Aorta (tissue), 5 donors: ENCODE measurements at regions of chr21 and their contacts with region 1.

Region 1: GRCh38 chr21:21247451-21247850 is 249.2 kb downstream of the NCAM2 start:
- DNase-seq: no peak
- ATAC-seq: no peak
- H3K4me3 ChIP-seq: no peak overlapping the region
- H3K27ac ChIP-seq: no peak overlapping the region
- H3K4me1 ChIP-seq: no peaks in the 10 kb centered on the region
- H3K27me3 ChIP-seq: no peaks in the 10 kb centered on the region

Region 2: DNA sequence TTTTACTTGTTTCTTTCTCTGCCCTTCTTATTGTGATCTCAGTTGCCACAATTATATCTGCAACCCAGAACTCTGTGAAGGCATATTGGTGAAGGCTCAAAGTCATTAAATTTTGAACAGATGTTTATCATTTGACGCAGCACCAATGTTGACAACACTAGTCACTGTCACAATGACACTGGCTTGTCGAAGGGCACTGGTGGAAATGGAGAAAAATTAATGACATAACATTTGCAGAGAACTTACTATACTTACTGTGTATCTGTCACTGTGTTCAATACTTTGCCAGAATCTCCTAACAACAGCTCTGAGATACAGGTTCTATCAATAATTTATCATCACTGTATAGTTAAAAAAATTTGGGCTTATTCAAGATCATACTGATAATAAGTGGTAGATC is 964.5 kb after region 1 on chr21:
- intact Hi-C with region 1: loop called in 1 of 2 experiments (anchors 10 kb)
- DNase-seq: no peak
- ATAC-seq: no peak
- H3K4me3 ChIP-seq: no peak overlapping the region
- H3K27ac ChIP-seq: no peak overlapping the region
- H3K4me1 ChIP-seq: no peaks in the 10 kb centered on the region
- H3K27me3 ChIP-seq: no peaks in the 10 kb centered on the region